Caco-2 (cell line): ENCODE measurements at regions of chr15 and their contacts with region 1.

Region 1: GRCh38 chr15:74540761-74541493 is at the start of gene ARID3B:
- DNase-seq: peak; percentile 94 to 98
- H3K4me3 ChIP-seq: peak within 1 kb of the TSS; percentile 91
- H3K4me3 Mint-ChIP-seq: peak within 1 kb of the TSS; percentile 87
- H3K27ac Mint-ChIP-seq: peak within 1 kb of the TSS; percentile 86
- H3K4me1 ChIP-seq: peaks cover 12% of the 10 kb centered on the region
- H3K4me1 Mint-ChIP-seq: peaks cover 13% of the 10 kb centered on the region
- H3K27me3 ChIP-seq: no peaks in the 10 kb centered on the region
- H3K27me3 Mint-ChIP-seq: no peaks in the 10 kb centered on the region
- CTCF ChIP-seq: no peak
- total RNA-seq, gene ARID3B: 36.1 and 37.0 TPM in 2 replicates

Region 2: GRCh38 chr15:74123138-74123443 is 417.8 kb before region 1 on chr15:
- CTCF ChIA-PET with region 1: no interaction called
- POLR2A ChIA-PET with region 1: no interaction called
- intact Hi-C with region 1: no loop called
- DNase-seq: no peak
- H3K4me3 ChIP-seq: no peak overlapping the region
- H3K4me3 Mint-ChIP-seq: no peak overlapping the region
- H3K27ac Mint-ChIP-seq: no peak overlapping the region
- H3K4me1 ChIP-seq: no peaks in the 10 kb centered on the region
- H3K4me1 Mint-ChIP-seq: no peaks in the 10 kb centered on the region
- H3K27me3 ChIP-seq: no peaks in the 10 kb centered on the region
- H3K27me3 Mint-ChIP-seq: peaks cover 21% of the 10 kb centered on the region
- CTCF ChIP-seq: no peak

Region 3: GRCh38 chr15:74373731-74374647 is 166.9 kb before region 1 on chr15:
- CTCF ChIA-PET with region 1: interaction called, 10 read pairs
- POLR2A ChIA-PET with region 1: no interaction called
- intact Hi-C with region 1: loop called (anchors 1 kb)
- DNase-seq: peak; percentile 96
- H3K4me3 ChIP-seq: peak overlapping the region; percentile 77
- H3K4me3 Mint-ChIP-seq: peak overlapping the region; percentile 77
- H3K27ac Mint-ChIP-seq: no peak overlapping the region
- H3K4me1 ChIP-seq: peaks cover 9% of the 10 kb centered on the region
- H3K4me1 Mint-ChIP-seq: no peaks in the 10 kb centered on the region
- H3K27me3 ChIP-seq: no peaks in the 10 kb centered on the region
- H3K27me3 Mint-ChIP-seq: peaks cover 6% of the 10 kb centered on the region
- CTCF ChIP-seq: peak; percentile 79 to 85

Region 4: GRCh38 chr15:74460871-74461846 is 79.8 kb before region 1 on chr15 and contains the start of gene UBL7:
- CTCF ChIA-PET with region 1: interaction called, 4 read pairs
- POLR2A ChIA-PET with region 1: interaction called, 15 read pairs
- intact Hi-C with region 1: no loop called
- DNase-seq: peak; percentile 97
- H3K4me3 ChIP-seq: peak within 1 kb of the TSS; percentile 51
- H3K4me3 Mint-ChIP-seq: peak within 1 kb of the TSS; percentile 92
- H3K27ac Mint-ChIP-seq: peak within 1 kb of the TSS; percentile 74
- H3K4me1 ChIP-seq: peaks cover 13% of the 10 kb centered on the region; the same call in 1 of the 2 replicates
- H3K4me1 Mint-ChIP-seq: peaks cover 28% of the 10 kb centered on the region
- H3K27me3 ChIP-seq: no peaks in the 10 kb centered on the region
- H3K27me3 Mint-ChIP-seq: no peaks in the 10 kb centered on the region
- CTCF ChIP-seq: peak in 1 of 2 experiments; percentile 51
- total RNA-seq, gene UBL7: 31.4 and 34.4 TPM in 2 replicates

Region 5: GRCh38 chr15:74502301-74502700 is 38.6 kb before region 1 on chr15:
- CTCF ChIA-PET with region 1: no interaction called
- POLR2A ChIA-PET with region 1: no interaction called
- intact Hi-C with region 1: loop called (anchors 2 kb)
- DNase-seq: no peak
- H3K4me3 ChIP-seq: no peak overlapping the region
- H3K4me3 Mint-ChIP-seq: no peak overlapping the region
- H3K27ac Mint-ChIP-seq: no peak overlapping the region
- H3K4me1 ChIP-seq: no peaks in the 10 kb centered on the region
- H3K4me1 Mint-ChIP-seq: no peaks in the 10 kb centered on the region
- H3K27me3 ChIP-seq: no peaks in the 10 kb centered on the region
- H3K27me3 Mint-ChIP-seq: no peaks in the 10 kb centered on the region
- CTCF ChIP-seq: peak in 1 of 2 experiments; percentile 12

Region 6: DNA sequence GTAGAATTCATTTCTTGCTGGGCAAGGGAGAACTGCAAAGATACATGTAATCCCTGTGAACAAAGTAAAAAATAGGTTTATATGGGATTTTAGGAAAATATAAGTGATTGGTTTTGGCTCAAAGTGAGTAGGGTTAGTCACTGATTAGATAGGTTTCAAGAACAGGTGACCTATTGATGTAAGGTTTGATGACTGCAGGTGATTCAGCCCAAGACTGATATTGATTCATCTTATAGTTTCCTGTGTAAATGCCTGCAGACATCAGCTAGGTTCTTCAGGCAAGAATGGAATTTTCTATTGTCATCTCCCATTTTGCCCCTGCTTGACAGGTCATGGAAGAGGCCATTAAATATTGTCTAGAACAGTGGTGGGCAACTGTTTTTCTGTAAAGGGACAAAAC is 23.8 kb before region 1 on chr15:
- CTCF ChIA-PET with region 1: no interaction called
- POLR2A ChIA-PET with region 1: no interaction called
- intact Hi-C with region 1: no loop called
- DNase-seq: no peak
- H3K4me3 ChIP-seq: no peak overlapping the region
- H3K4me3 Mint-ChIP-seq: no peak overlapping the region
- H3K27ac Mint-ChIP-seq: no peak overlapping the region
- H3K4me1 ChIP-seq: no peaks in the 10 kb centered on the region
- H3K4me1 Mint-ChIP-seq: no peaks in the 10 kb centered on the region
- H3K27me3 ChIP-seq: no peaks in the 10 kb centered on the region
- H3K27me3 Mint-ChIP-seq: no peaks in the 10 kb centered on the region
- CTCF ChIP-seq: no peak

Region 7: GRCh38 chr15:74615508-74616365 is 74.8 kb after region 1 on chr15 and contains the start of gene CLK3:
- CTCF ChIA-PET with region 1: no interaction called
- POLR2A ChIA-PET with region 1: interaction called, 8 read pairs
- intact Hi-C with region 1: loop called (anchors 5 kb)
- DNase-seq: peak; percentile 95 to 99
- H3K4me3 ChIP-seq: peak within 1 kb of the TSS; percentile 94
- H3K4me3 Mint-ChIP-seq: peak within 1 kb of the TSS; percentile 86
- H3K27ac Mint-ChIP-seq: peak within 1 kb of the TSS; percentile 82
- H3K4me1 ChIP-seq: peaks cover 9% of the 10 kb centered on the region; the same call in 1 of the 2 replicates
- H3K4me1 Mint-ChIP-seq: no peaks in the 10 kb centered on the region
- H3K27me3 ChIP-seq: no peaks in the 10 kb centered on the region
- H3K27me3 Mint-ChIP-seq: no peaks in the 10 kb centered on the region
- CTCF ChIP-seq: no peak
- total RNA-seq, gene CLK3: 49.4 and 54.5 TPM in 2 replicates